Endothelial cell of umbilical vein (primary cell): ENCODE measurements at regions of chr2 and their contacts with region 1.

Region 1: GRCh38 chr2:181810823-181811695 is 80.5 kb upstream of the ITPRID2 start:
- DNase-seq: peak; percentile 99
- H3K4me3 ChIP-seq: peak overlapping the region in 1 of 3 experiments; percentile 18
- H3K27ac ChIP-seq: peak overlapping the region; percentile 93
- H3K4me1 ChIP-seq: peaks cover 61% of the 10 kb centered on the region
- H3K27me3 ChIP-seq: no peaks in the 10 kb centered on the region
- CTCF ChIP-seq: no peak
- POLR2A ChIP-seq: peak; percentile 61

Region 2: GRCh38 chr2:181780047-181780651 is 30.9 kb before region 1 on chr2:
- CTCF ChIA-PET with region 1: interaction called, 4 read pairs
- POLR2A ChIA-PET with region 1: no interaction called
- dilution Hi-C with region 1: no loop called
- intact Hi-C with region 1: loop called (anchors 1 kb)
- DNase-seq: peak; percentile 57
- H3K4me3 ChIP-seq: no peak overlapping the region
- H3K27ac ChIP-seq: peak overlapping the region; percentile 13
- H3K4me1 ChIP-seq: peaks cover 54% of the 10 kb centered on the region
- H3K27me3 ChIP-seq: no peaks in the 10 kb centered on the region
- CTCF ChIP-seq: no peak
- POLR2A ChIP-seq: no peak

Region 3: GRCh38 chr2:181790716-181791649 is 20.1 kb before region 1 on chr2:
- CTCF ChIA-PET with region 1: interaction called, 7 read pairs
- POLR2A ChIA-PET with region 1: interaction called, 3 read pairs
- dilution Hi-C with region 1: no loop called
- intact Hi-C with region 1: loop called (anchors 1 kb)
- DNase-seq: peak; percentile 99
- H3K4me3 ChIP-seq: no peak overlapping the region
- H3K27ac ChIP-seq: peak overlapping the region; percentile 96
- H3K4me1 ChIP-seq: peaks cover 45% of the 10 kb centered on the region
- H3K27me3 ChIP-seq: no peaks in the 10 kb centered on the region
- CTCF ChIP-seq: no peak
- POLR2A ChIP-seq: peak; percentile 72

Region 4: GRCh38 chr2:181828122-181828705 is 17.2 kb after region 1 on chr2:
- CTCF ChIA-PET with region 1: no interaction called
- POLR2A ChIA-PET with region 1: no interaction called
- dilution Hi-C with region 1: no loop called
- intact Hi-C with region 1: no loop called
- DNase-seq: no peak
- H3K4me3 ChIP-seq: no peak overlapping the region
- H3K27ac ChIP-seq: no peak overlapping the region
- H3K4me1 ChIP-seq: no peaks in the 10 kb centered on the region
- H3K27me3 ChIP-seq: no peaks in the 10 kb centered on the region
- CTCF ChIP-seq: no peak
- POLR2A ChIP-seq: no peak

Region 5: GRCh38 chr2:181853696-181854095 is 42.6 kb after region 1 on chr2:
- CTCF ChIA-PET with region 1: no interaction called
- POLR2A ChIA-PET with region 1: interaction called, 3 read pairs
- dilution Hi-C with region 1: no loop called
- intact Hi-C with region 1: loop called (anchors 2 kb)
- DNase-seq: no peak
- H3K4me3 ChIP-seq: no peak overlapping the region
- H3K27ac ChIP-seq: no peak overlapping the region
- H3K4me1 ChIP-seq: peaks cover 4% of the 10 kb centered on the region
- H3K27me3 ChIP-seq: no peaks in the 10 kb centered on the region
- CTCF ChIP-seq: no peak
- POLR2A ChIP-seq: no peak

Region 6: GRCh38 chr2:181953881-181954537 is 142.9 kb after region 1 on chr2:
- CTCF ChIA-PET with region 1: interaction called, 6 read pairs
- POLR2A ChIA-PET with region 1: no interaction called
- dilution Hi-C with region 1: no loop called
- intact Hi-C with region 1: loop called (anchors 2 kb)
- DNase-seq: peak; percentile 81
- H3K4me3 ChIP-seq: peak overlapping the region; percentile 33 to 42 (median 39)
- H3K27ac ChIP-seq: peak overlapping the region; percentile 74
- H3K4me1 ChIP-seq: peaks cover 29% of the 10 kb centered on the region
- H3K27me3 ChIP-seq: no peaks in the 10 kb centered on the region
- CTCF ChIP-seq: peak; percentile 47 to 63
- POLR2A ChIP-seq: no peak

Region 7: DNA sequence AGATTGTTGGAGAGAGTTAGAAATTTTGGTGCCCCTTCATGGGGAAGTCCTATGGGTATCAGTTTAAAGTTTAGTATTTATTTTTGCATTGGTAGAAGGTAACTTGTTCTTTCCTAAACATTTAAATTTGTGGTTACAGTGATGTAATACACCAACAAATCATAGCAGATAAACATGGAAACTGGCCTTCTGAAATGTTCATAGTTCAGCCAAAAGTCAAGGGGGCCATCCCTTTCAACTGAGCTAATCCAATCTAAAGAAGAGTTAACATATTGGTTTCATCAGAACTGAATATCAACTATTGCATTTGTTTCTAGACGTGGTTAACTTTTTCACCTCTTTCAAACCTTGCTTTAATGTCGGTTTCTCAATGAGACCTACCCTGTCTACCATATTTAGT is 220.9 kb after region 1 on chr2:
- CTCF ChIA-PET with region 1: no interaction called
- POLR2A ChIA-PET with region 1: no interaction called
- dilution Hi-C with region 1: no loop called
- intact Hi-C with region 1: no loop called
- DNase-seq: no peak
- H3K4me3 ChIP-seq: no peak overlapping the region
- H3K27ac ChIP-seq: no peak overlapping the region
- H3K4me1 ChIP-seq: no peaks in the 10 kb centered on the region
- H3K27me3 ChIP-seq: no peaks in the 10 kb centered on the region
- CTCF ChIP-seq: no peak
- POLR2A ChIP-seq: no peak

Region 8: GRCh38 chr2:182066400-182067087 is 255.5 kb after region 1 on chr2:
- CTCF ChIA-PET with region 1: no interaction called
- POLR2A ChIA-PET with region 1: no interaction called
- dilution Hi-C with region 1: no loop called
- intact Hi-C with region 1: loop called (anchors 2 kb)
- DNase-seq: peak; percentile 91
- H3K4me3 ChIP-seq: no peak overlapping the region
- H3K27ac ChIP-seq: no peak overlapping the region
- H3K4me1 ChIP-seq: peaks cover 25% of the 10 kb centered on the region
- H3K27me3 ChIP-seq: no peaks in the 10 kb centered on the region
- CTCF ChIP-seq: no peak
- POLR2A ChIP-seq: no peak

Region 9: DNA sequence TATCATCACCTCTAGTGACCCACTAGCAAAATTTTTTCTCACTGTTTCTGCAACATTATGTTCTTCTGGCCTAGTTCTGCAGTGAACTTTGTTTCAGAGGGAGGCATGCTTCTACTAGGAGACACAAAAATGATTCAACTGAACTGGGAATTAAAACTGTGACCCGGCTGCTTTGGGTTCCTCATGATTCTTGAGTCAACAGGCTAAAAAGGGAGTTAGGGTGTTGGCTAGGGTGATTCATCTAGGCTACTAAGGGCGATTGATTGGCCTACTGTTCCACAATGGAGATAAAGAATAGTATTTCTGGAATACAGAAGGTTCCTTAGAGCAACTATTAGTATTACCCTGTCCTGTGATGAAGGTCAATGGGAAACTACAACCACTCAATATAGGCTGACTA is 354.1 kb after region 1 on chr2:
- CTCF ChIA-PET with region 1: no interaction called
- POLR2A ChIA-PET with region 1: no interaction called
- dilution Hi-C with region 1: no loop called
- intact Hi-C with region 1: no loop called
- DNase-seq: no peak
- H3K4me3 ChIP-seq: no peak overlapping the region
- H3K27ac ChIP-seq: no peak overlapping the region
- H3K4me1 ChIP-seq: no peaks in the 10 kb centered on the region
- H3K27me3 ChIP-seq: no peaks in the 10 kb centered on the region
- CTCF ChIP-seq: no peak
- POLR2A ChIP-seq: no peak

Region 10: DNA sequence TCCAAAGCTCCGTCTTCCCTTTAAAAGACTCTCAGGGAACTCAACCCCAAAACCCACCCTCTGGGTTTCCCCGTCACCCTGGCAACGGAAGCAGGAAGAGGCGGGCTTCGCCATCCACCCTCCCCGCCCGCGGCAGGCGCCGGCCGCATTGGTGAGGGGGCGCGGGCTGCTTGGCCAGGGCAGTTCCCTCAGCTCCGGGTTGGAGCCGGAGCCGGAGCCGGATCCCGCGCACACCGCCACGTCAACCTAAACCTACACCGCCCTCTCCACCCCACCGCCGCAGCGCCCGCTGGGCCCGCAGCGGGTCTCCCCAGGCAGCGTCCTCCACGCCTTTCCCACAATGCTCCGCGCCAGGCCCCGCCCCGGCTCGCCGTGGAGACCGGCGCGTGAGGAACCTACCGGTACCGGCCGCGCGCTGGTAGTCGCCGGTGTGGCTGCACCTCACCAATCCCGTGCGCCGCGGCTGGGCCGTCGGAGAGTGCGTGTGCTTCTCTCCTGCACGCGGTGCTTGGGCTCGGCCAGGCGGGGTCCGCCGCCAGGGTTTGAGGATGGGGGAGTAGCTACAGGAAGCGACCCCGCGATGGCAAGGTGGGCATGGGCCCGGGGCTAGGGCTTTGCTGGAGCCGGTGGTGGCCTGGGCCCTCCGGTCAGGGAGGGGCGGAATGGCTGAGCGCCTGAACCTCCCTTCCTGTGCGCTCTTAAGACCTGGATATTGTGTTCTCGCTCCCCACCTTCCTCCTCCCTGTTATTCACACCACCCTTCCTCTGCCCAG is 905.0 kb after region 1 on chr2 and contains the start of gene DNAJC10:
- CTCF ChIA-PET with region 1: no interaction called
- POLR2A ChIA-PET with region 1: no interaction called
- dilution Hi-C with region 1: no loop called
- intact Hi-C with region 1: loop called (anchors 5 kb)
- DNase-seq: peak; percentile 98
- H3K4me3 ChIP-seq: peak within 1 kb of the TSS; percentile 65 to 95 (median 95)
- H3K27ac ChIP-seq: peak within 1 kb of the TSS; percentile 88
- H3K4me1 ChIP-seq: peaks cover 32% of the 10 kb centered on the region
- H3K27me3 ChIP-seq: no peaks in the 10 kb centered on the region
- CTCF ChIP-seq: peak in 1 of 2 donors; percentile 0
- POLR2A ChIP-seq: peak; percentile 95
- total RNA-seq, gene DNAJC10: 171 and 201 TPM in 2 replicates